ENCODE measurements at regions of chr7 and their contacts with region 1.

Region 1: DNA sequence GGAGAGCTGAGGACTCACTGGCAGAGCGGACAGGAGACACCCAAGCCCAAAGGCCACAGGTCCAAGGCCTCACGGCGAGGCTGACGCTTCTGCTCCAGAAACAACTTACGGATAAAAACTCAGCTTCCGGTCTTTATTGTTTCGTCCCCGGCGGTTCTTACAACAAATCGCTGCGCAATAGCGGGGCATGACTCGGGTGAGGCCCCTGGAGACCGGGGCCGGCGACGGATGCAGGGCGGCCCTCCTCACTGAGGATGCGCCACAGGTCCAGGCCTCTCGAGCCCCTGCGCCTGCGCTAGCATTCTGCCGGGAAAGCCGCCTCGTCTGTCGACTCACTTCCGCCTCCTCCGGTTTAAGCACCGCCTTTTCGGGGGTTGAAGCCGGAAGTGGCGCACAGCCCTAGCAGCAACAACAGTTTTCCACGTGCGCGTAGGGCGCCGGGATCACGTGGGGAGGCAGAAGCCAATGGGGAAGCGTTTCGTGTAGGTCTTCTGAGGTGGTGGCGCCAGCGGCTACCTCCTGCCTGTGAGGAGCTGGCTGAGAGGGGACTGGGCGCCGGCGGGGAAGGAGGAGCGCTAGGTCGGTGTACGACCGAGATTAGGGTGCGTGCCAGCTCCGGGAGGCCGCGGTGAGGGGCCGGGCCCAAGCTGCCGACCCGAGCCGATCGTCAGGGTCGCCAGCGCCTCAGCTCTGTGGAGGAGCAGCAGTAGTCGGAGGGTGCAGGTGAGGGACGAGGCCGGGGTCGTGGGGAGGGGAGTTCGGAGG is at the starts of genes DNAJB9 and THAP5:
- DNase-seq: peak; percentile 100
- H3K4me3 Mint-ChIP-seq: peak within 1 kb of the TSS; percentile 98
- H3K27ac Mint-ChIP-seq: peak within 1 kb of the TSS; percentile 99
- H3K4me1 Mint-ChIP-seq: peaks cover 43% of the 10 kb centered on the region
- H3K27me3 Mint-ChIP-seq: no peaks in the 10 kb centered on the region
- total RNA-seq, gene DNAJB9: 10.8 to 12.6 TPM
- total RNA-seq, gene THAP5: 26.5 to 30.4 TPM

Region 2: GRCh38 chr7:108525985-108526767 is 43.4 kb before region 1 on chr7 and contains the start of gene PNPLA8:
- CTCF ChIA-PET with region 1: interaction called, 5 read pairs
- POLR2A ChIA-PET with region 1: interaction called, 61 read pairs
- intact Hi-C with region 1: loop called (anchors 1 kb)
- DNase-seq: peak; percentile 100
- H3K4me3 Mint-ChIP-seq: peak within 1 kb of the TSS; percentile 86
- H3K27ac Mint-ChIP-seq: peak within 1 kb of the TSS; percentile 93
- H3K4me1 Mint-ChIP-seq: peaks cover 31% of the 10 kb centered on the region
- H3K27me3 Mint-ChIP-seq: no peaks in the 10 kb centered on the region
- total RNA-seq, gene PNPLA8: 21.7 to 22.1 TPM

Region 3: GRCh38 chr7:108605559-108606201 is 36.1 kb after region 1 on chr7:
- CTCF ChIA-PET with region 1: no interaction called
- POLR2A ChIA-PET with region 1: interaction called, 6 read pairs
- intact Hi-C with region 1: loop called (anchors 1 kb)
- DNase-seq: no peak
- H3K4me3 Mint-ChIP-seq: no peak overlapping the region
- H3K27ac Mint-ChIP-seq: peak overlapping the region; percentile 40
- H3K4me1 Mint-ChIP-seq: peaks cover 11% of the 10 kb centered on the region
- H3K27me3 Mint-ChIP-seq: peaks cover 2% of the 10 kb centered on the region